ENCODE measurements at regions of chr1 and their contacts with region 1.

Region 1: DNA sequence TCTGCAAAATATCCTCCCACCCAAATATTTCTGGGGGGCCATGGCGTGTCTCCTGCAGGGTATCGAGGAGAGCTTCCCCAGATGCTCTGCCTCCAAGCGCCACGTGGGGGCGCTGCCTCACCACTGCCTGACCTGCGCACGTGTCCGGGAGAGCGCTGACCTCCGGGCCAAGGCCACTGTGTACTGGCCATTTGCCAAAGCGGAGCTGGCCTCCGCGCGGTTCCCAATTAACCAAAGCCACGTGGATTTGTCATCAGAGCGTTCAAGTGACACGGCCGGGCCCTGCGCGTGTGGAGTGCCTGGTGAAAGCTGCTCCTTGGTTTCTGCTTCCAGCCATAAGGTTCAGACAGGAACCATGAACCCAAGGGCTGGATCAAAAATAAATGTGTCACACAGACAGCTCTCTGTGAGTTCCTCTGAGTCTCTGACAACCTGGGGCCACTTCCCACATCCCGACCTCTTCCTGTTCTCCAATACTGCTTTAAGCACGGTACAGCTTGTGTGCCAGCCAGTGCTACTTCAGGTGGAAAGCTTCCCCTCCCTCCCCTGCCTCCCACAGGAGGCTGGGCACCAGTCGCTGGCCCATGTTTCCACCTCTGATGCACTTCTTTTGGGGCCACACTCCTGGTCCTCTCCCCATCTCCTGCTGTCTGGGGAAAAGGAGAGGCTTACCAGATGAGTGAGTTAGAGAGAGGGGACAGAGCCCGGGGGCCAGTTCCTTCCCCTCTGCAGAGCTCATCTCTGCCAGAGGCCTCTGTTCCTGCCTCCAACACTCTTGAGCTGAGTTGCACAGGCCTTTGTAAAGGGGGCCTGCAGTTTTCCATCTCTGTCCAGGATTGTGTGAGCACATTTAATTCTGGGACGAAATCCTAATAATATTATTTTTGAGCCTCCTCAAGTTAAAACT is 26.1 kb downstream of the ZP4 start:
- DNase-seq: peak; percentile 55
- ATAC-seq: peak; percentile 89
- H3K4me3 ChIP-seq: peak overlapping the region; percentile 50; the same call in 1 of the 2 replicates
- H3K27ac ChIP-seq: no peak overlapping the region
- H3K4me1 ChIP-seq: 0 out of 2 replicates have a peak, but pooled peaks cover 3% of the 10 kb centered on the region
- H3K27me3 ChIP-seq: no peaks in the 10 kb centered on the region
- CTCF ChIP-seq: peak; percentile 92

Region 2: GRCh38 chr1:237879195-237879594 is 14.6 kb after region 1 on chr1:
- CTCF ChIA-PET with region 1: no interaction called
- POLR2A ChIA-PET with region 1: no interaction called
- intact Hi-C with region 1: no loop called
- DNase-seq: peak; percentile 65
- ATAC-seq: peak; percentile 80
- H3K4me3 ChIP-seq: no peak overlapping the region
- H3K27ac ChIP-seq: no peak overlapping the region
- H3K4me1 ChIP-seq: peaks cover 26% of the 10 kb centered on the region
- H3K27me3 ChIP-seq: no peaks in the 10 kb centered on the region
- CTCF ChIP-seq: no peak

Region 3: GRCh38 chr1:237938553-237938952 is 74.0 kb after region 1 on chr1:
- CTCF ChIA-PET with region 1: no interaction called
- POLR2A ChIA-PET with region 1: no interaction called
- intact Hi-C with region 1: loop called (anchors 1 kb)
- DNase-seq: peak; percentile 56
- ATAC-seq: no peak
- H3K4me3 ChIP-seq: no peak overlapping the region
- H3K27ac ChIP-seq: no peak overlapping the region
- H3K4me1 ChIP-seq: no peaks in the 10 kb centered on the region
- H3K27me3 ChIP-seq: no peaks in the 10 kb centered on the region
- CTCF ChIP-seq: peak; percentile 61

Region 4: DNA sequence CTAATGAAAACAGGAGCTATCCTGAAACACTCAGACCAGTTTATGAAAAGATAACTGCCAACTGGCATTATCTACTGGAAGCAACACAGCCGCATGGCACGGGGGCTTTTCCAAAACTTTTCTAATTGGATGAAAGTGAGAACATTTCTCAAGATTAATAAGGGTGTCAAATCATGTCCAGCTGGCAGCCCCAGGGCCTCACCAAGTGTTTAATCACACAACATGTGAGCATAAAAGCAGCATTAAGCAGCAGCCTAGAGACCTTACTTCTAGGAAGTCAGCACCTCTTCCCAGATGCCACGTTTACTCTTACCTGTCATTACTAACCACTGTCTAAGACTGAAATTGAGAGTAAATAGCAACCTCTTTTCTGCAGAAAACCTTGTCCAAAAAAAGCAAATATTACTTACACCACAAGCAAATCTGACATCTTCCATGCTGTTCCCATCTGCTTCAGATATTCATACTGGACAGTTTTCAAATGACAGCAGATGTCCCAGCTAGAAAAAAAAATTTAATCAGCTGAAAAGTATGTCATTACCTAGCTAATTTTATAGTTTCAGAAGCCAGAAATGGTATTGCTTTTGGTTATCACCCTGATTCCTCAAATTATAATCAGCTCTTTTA is 367.6 kb after region 1 on chr1:
- CTCF ChIA-PET with region 1: interaction called, 4 read pairs
- POLR2A ChIA-PET with region 1: no interaction called
- intact Hi-C with region 1: loop called (anchors 2 kb)
- DNase-seq: no peak
- ATAC-seq: no peak
- H3K4me3 ChIP-seq: no peak overlapping the region
- H3K27ac ChIP-seq: no peak overlapping the region
- H3K4me1 ChIP-seq: no peaks in the 10 kb centered on the region
- H3K27me3 ChIP-seq: no peaks in the 10 kb centered on the region
- CTCF ChIP-seq: no peak

Region 5: GRCh38 chr1:238252033-238252802 is 387.6 kb after region 1 on chr1:
- CTCF ChIA-PET with region 1: no interaction called
- POLR2A ChIA-PET with region 1: no interaction called
- intact Hi-C with region 1: loop called (anchors 1 kb)
- DNase-seq: peak; percentile 70
- ATAC-seq: peak; percentile 86
- H3K4me3 ChIP-seq: no peak overlapping the region
- H3K27ac ChIP-seq: no peak overlapping the region
- H3K4me1 ChIP-seq: no peaks in the 10 kb centered on the region
- H3K27me3 ChIP-seq: no peaks in the 10 kb centered on the region
- CTCF ChIP-seq: peak; percentile 70

Region 6: DNA sequence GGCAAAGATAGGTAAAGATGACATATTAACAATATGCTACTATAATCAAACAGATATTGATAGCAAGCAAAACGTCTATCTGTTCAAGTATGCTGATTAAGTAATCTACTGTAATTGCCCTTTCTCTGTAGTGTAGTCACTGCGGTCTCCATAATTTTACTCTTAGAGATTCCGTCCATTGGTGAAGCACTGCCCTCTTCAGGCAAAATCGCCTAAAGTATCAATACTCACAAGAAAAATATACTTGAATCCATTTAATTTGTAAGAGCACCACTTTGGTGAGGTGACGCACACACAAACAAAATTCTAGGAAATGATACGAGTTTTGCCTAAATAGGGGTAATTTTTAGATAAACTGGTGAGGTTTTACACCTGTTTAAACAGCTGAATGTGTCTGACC is 1087.2 kb after region 1 on chr1:
- CTCF ChIA-PET with region 1: no interaction called
- POLR2A ChIA-PET with region 1: no interaction called
- intact Hi-C with region 1: loop called (anchors 5 kb)
- DNase-seq: peak; percentile 81
- ATAC-seq: peak; percentile 35
- H3K4me3 ChIP-seq: no peak overlapping the region
- H3K27ac ChIP-seq: no peak overlapping the region
- H3K4me1 ChIP-seq: peaks cover 20% of the 10 kb centered on the region
- H3K27me3 ChIP-seq: no peaks in the 10 kb centered on the region
- CTCF ChIP-seq: peak; percentile 93

Measured in PC-3 (cell line).